PC-9 (cell line): ENCODE measurements at regions of chr1 and their contacts with region 1.

Region 1: DNA sequence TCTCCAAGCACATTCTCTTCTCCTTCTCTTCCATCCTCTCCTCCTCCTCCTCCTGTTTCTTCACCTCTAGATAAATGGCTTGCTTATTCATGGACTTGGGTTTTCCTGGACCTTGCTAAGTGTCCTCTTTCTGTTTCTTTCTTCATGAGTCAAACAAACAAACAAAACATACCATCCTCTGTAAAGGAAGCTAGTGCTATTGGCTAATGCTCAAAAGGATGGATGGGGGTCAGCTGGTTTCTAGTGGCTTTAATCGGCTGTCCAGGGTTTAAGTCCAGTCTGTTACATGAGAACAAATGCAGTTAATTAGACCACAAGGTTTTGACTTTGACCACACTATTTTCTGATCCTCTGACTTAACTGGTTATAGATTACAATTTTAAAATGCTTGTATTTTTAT is 83.8 kb upstream of the TSPAN2 start:
- DNase-seq: no peak
- H3K4me3 ChIP-seq: no peak overlapping the region
- H3K27ac ChIP-seq: no peak overlapping the region
- H3K4me1 ChIP-seq: peaks cover 34% of the 10 kb centered on the region
- H3K27me3 ChIP-seq: no peaks in the 10 kb centered on the region
- CTCF ChIP-seq: no peak

Region 2: GRCh38 chr1:115006191-115006590 is 167.0 kb before region 1 on chr1:
- CTCF ChIA-PET with region 1: no interaction called
- POLR2A ChIA-PET with region 1: interaction called, 10 read pairs
- intact Hi-C with region 1: no loop called
- DNase-seq: no peak
- H3K4me3 ChIP-seq: no peak overlapping the region
- H3K27ac ChIP-seq: no peak overlapping the region
- H3K4me1 ChIP-seq: no peaks in the 10 kb centered on the region
- H3K27me3 ChIP-seq: no peaks in the 10 kb centered on the region
- CTCF ChIP-seq: no peak

Region 3: GRCh38 chr1:115041654-115042053 is 131.5 kb before region 1 on chr1:
- CTCF ChIA-PET with region 1: no interaction called
- POLR2A ChIA-PET with region 1: no interaction called
- intact Hi-C with region 1: no loop called
- DNase-seq: no peak
- H3K4me3 ChIP-seq: no peak overlapping the region
- H3K27ac ChIP-seq: no peak overlapping the region
- H3K4me1 ChIP-seq: no peaks in the 10 kb centered on the region
- H3K27me3 ChIP-seq: no peaks in the 10 kb centered on the region
- CTCF ChIP-seq: peak; percentile 65